ENCODE measurements at regions of chr1 and their contacts with region 1.

Region 1: GRCh38 chr1:19651141-19651737 is 7.1 kb downstream of the NBL1 start:
- DNase-seq: no peak
- H3K4me3 ChIP-seq: no peak overlapping the region
- H3K27me3 ChIP-seq: no peaks in the 10 kb centered on the region
- CTCF ChIP-seq: peak; percentile 76

Region 2: GRCh38 chr1:19374083-19374801 is 277.0 kb before region 1 on chr1:
- CTCF ChIA-PET with region 1: interaction called, 10 read pairs
- POLR2A ChIA-PET with region 1: no interaction called
- DNase-seq: no peak
- H3K4me3 ChIP-seq: no peak overlapping the region
- H3K27me3 ChIP-seq: no peaks in the 10 kb centered on the region
- CTCF ChIP-seq: peak; percentile 57

Region 3: GRCh38 chr1:19398309-19398760 is 252.9 kb before region 1 on chr1:
- CTCF ChIA-PET with region 1: interaction called, 11 read pairs
- POLR2A ChIA-PET with region 1: no interaction called
- DNase-seq: peak; percentile 97
- H3K4me3 ChIP-seq: no peak overlapping the region
- H3K27me3 ChIP-seq: no peaks in the 10 kb centered on the region
- CTCF ChIP-seq: peak; percentile 74

Region 4: GRCh38 chr1:19485362-19486187 is 165.7 kb before region 1 on chr1 and contains the start of gene CAPZB:
- CTCF ChIA-PET with region 1: interaction called, 25 read pairs
- POLR2A ChIA-PET with region 1: no interaction called
- DNase-seq: no peak
- H3K4me3 ChIP-seq: peak within 1 kb of the TSS; percentile 99
- H3K27me3 ChIP-seq: no peaks in the 10 kb centered on the region
- CTCF ChIP-seq: no peak
- polyA plus RNA-seq, gene CAPZB: 276 and 285 TPM in 2 replicates